GM18951 (cell line): ENCODE measurements at regions of chrX and their contacts with region 1.

Region 1: DNA sequence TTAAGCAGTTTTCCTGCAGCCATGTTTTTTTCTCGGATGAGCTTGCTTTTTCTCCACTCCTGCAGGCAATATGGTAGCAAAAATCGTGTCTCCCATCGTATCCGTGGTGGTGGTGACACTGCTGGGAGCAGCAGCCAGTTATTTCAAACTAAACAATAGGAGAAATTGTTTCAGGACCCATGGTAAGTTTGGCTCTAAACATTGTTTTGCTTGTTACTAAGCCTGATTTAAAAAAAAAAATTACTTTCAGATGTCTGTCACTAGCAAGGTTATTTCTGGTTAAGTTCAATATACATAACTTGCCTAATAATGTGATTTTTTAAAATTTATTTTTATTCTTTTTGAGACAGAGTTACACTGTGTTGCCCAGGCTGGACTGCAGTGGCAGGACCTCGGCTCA is 17.5 kb upstream of the GYG2 start:
- POLR2A ChIP-seq: no peak

Region 2: DNA sequence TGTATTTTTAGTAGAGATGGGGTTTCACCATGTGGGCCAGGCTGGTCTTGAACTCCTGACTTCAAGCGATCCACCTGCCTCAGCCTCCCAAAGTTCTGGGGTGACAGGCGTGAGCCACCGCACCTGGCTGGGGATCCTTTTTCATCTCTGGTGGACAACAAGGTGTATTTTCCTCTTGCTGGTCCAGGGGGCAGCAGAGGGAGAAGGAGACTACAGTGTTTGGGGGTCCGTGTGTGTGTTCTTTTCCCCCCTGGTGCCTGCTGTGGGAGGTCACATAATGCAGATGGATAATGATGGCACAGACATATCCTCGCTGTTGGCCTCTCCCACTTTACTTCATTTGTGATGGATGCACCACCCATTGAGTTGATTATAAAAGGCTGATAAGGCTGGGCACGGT is 159.2 kb before region 1 on chrX:
- in situ Hi-C with region 1: loop called (anchors 5 kb)
- POLR2A ChIP-seq: no peak